HEK293 (cell line): ENCODE measurements at regions of chr3 and their contacts with region 1.

Region 1: GRCh38 chr3:180594631-180595558 is 7.1 kb upstream of the TTC14 start:
- H3K4me3 ChIP-seq: no peak overlapping the region
- H3K27ac ChIP-seq: no peak overlapping the region
- H3K4me1 ChIP-seq: no peaks in the 10 kb centered on the region
- CTCF ChIP-seq: no peak

Region 2: DNA sequence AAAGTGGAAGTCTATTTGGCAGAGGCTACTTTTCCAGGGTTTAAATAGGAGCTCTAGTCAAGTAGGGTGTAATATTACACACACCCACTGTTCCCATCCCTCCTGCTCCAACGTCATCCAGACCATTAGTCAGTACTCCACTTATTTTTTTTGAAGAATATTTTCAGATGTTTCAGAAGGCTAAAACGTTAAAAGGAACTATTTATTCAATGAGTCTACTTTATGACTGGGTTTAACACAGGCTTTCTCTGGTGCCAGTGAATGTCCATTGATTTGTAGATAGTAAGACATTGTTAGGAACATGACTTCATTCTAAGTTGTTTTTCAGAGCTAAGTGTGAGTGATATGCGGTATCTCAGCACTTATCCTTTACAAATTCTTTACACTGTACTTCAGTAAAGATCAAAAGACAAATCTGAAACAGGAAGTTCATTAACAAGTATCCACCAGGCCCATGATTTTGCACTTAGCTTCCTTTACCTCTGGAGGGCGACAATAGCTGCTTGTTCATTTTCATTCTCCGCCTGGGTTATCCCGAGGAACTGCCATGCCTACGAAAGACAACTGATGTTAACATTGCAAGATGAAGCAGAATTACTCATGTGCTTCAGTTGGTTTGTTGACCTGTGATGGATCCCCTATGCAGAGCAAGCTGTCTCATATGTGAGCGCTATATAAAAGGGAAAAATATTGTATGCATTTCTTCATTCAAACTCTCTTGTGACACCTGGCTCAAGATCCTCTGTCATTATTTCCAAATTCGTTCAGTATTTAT is 783.4 kb before region 1 on chr3:
- CTCF ChIA-PET with region 1: interaction called, 13 read pairs
- POLR2A ChIA-PET with region 1: no interaction called
- H3K4me3 ChIP-seq: no peak overlapping the region
- H3K27ac ChIP-seq: no peak overlapping the region
- H3K4me1 ChIP-seq: no peaks in the 10 kb centered on the region
- CTCF ChIP-seq: no peak